Spleen (tissue), 13 donors: ENCODE measurements at regions of chr10 and their contacts with region 1.

Region 1: GRCh38 chr10:51960494-51960895 is 261.1 kb upstream of the CSTF2T start:
- DNase-seq: no peak
- H3K4me3 ChIP-seq: no peak overlapping the region
- H3K27ac ChIP-seq: no peak overlapping the region
- H3K4me1 ChIP-seq: no peaks in the 10 kb centered on the region
- H3K27me3 ChIP-seq: peaks cover 0 to 4% (median 0%) of the 10 kb centered on the region in 7 donors
- CTCF ChIP-seq: peak in 8 of 11 experiments; percentile 27 to 59 (median 50)
- POLR2A ChIP-seq: no peak

Region 2: DNA sequence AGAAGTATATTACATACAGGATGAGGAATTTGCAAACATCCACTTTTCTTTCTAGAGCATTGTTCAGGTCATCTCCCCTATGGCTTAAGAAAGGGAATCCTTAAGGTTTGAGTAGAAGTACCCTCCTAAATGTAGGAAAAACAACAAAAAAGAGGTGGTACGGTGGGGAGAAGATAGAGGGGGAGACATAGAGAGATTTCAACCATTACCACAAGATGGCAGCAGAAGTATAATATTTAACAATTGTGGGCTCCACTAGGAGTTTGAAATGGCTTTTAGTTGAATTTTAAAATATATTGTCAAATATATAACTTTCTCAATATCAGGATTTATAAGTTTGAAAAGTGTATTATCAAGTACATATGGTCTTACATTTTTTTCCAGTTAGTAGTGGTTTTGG is 958.9 kb before region 1 on chr10:
- intact Hi-C with region 1: loop called (anchors 10 kb)
- DNase-seq: no peak
- H3K4me3 ChIP-seq: no peak overlapping the region
- H3K27ac ChIP-seq: no peak overlapping the region
- H3K4me1 ChIP-seq: peaks cover 0 to 8% (median 0%) of the 10 kb centered on the region in 6 donors
- H3K27me3 ChIP-seq: peaks cover 0 to 13% (median 0%) of the 10 kb centered on the region in 7 donors
- CTCF ChIP-seq: peak in 10 of 11 experiments; percentile 11 to 59 (median 37)
- POLR2A ChIP-seq: no peak

Region 3: GRCh38 chr10:51389415-51390321 is 570.8 kb before region 1 on chr10:
- intact Hi-C with region 1: loop called (anchors 5 kb)
- DNase-seq: no peak
- H3K4me3 ChIP-seq: no peak overlapping the region
- H3K27ac ChIP-seq: peak overlapping the region in 1 of 8 donors; percentile 23
- H3K4me1 ChIP-seq: no peaks in the 10 kb centered on the region
- H3K27me3 ChIP-seq: no peaks in the 10 kb centered on the region
- CTCF ChIP-seq: peak in 8 of 11 experiments; percentile 32 to 70 (median 60)
- POLR2A ChIP-seq: no peak